ENCODE measurements at regions of chr11 and their contacts with region 1.

Region 1: DNA sequence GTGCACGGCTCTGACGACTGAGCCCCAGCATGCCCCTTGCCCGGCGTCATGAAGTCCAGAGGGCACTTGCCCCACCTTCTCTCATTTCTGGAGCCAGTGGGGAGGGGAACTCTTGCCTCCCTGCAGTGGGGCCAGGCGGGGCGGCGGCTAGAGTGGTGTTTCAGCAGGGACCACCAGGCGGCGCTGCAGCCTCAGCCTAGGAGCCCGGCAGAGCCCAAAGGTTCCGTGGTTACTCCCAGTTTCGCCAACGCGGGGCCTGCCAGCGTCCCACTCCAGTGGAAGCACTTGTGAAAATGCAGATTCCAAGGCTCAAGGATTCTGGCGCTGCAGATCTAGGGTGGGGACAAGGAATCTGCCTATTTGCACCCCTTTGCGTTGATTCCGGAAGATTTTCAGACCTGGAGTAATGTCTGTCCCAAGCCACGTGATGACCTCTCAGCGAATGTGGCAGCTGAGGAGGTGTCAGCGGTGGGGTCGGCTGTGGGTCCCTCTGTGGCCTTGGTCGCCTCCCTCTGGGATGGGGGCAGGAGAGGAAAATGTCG is 55.7 kb downstream of the CD82 start:
- DNase-seq: peak; percentile 78 to 89
- H3K4me3 ChIP-seq: no peak overlapping the region
- H3K4me3 Mint-ChIP-seq: peak overlapping the region; percentile 23
- H3K27ac Mint-ChIP-seq: no peak overlapping the region
- H3K4me1 ChIP-seq: no peaks in the 10 kb centered on the region
- H3K4me1 Mint-ChIP-seq: no peaks in the 10 kb centered on the region
- H3K27me3 ChIP-seq: no peaks in the 10 kb centered on the region; the same call in 1 of the 2 replicates
- H3K27me3 Mint-ChIP-seq: no peaks in the 10 kb centered on the region
- CTCF ChIP-seq: peak; percentile 95 to 97

Region 2: GRCh38 chr11:44095506-44096394 is 525.5 kb before region 1 on chr11 and contains the start of gene EXT2:
- CTCF ChIA-PET with region 1: no interaction called
- POLR2A ChIA-PET with region 1: no interaction called
- intact Hi-C with region 1: loop called (anchors 2 kb)
- DNase-seq: peak; percentile 84 to 92
- H3K4me3 ChIP-seq: peak within 1 kb of the TSS; percentile 95
- H3K4me3 Mint-ChIP-seq: peak within 1 kb of the TSS; percentile 94
- H3K27ac Mint-ChIP-seq: peak within 1 kb of the TSS; percentile 83
- H3K4me1 ChIP-seq: peaks cover 6% of the 10 kb centered on the region; the same call in 1 of the 2 replicates
- H3K4me1 Mint-ChIP-seq: peaks cover 18% of the 10 kb centered on the region
- H3K27me3 ChIP-seq: no peaks in the 10 kb centered on the region
- H3K27me3 Mint-ChIP-seq: peaks cover 3% of the 10 kb centered on the region
- CTCF ChIP-seq: peak; percentile 76 to 97
- total RNA-seq, gene EXT2: 71.5 and 83.3 TPM in 2 replicates

Region 3: GRCh38 chr11:44565211-44565952 is 55.8 kb before region 1 on chr11 and contains the start of gene CD82:
- CTCF ChIA-PET with region 1: interaction called, 36 read pairs
- POLR2A ChIA-PET with region 1: no interaction called
- intact Hi-C with region 1: loop called (anchors 2 kb)
- DNase-seq: peak; percentile 98 to 99
- H3K4me3 ChIP-seq: peak within 1 kb of the TSS; percentile 52
- H3K4me3 Mint-ChIP-seq: peak within 1 kb of the TSS; percentile 72
- H3K27ac Mint-ChIP-seq: peak within 1 kb of the TSS; percentile 51
- H3K4me1 ChIP-seq: no peaks in the 10 kb centered on the region
- H3K4me1 Mint-ChIP-seq: no peaks in the 10 kb centered on the region
- H3K27me3 ChIP-seq: no peaks in the 10 kb centered on the region; the same call in 1 of the 2 replicates
- H3K27me3 Mint-ChIP-seq: peaks cover 4% of the 10 kb centered on the region
- CTCF ChIP-seq: peak; percentile 35
- total RNA-seq, gene CD82: 3.7 and 4.3 TPM in 2 replicates

Region 4: GRCh38 chr11:44658506-44658850 is 37.3 kb after region 1 on chr11:
- CTCF ChIA-PET with region 1: no interaction called
- POLR2A ChIA-PET with region 1: no interaction called
- intact Hi-C with region 1: no loop called
- DNase-seq: peak in 1 of 2 experiments; percentile 21
- H3K4me3 ChIP-seq: no peak overlapping the region
- H3K4me3 Mint-ChIP-seq: no peak overlapping the region
- H3K27ac Mint-ChIP-seq: no peak overlapping the region
- H3K4me1 ChIP-seq: no peaks in the 10 kb centered on the region
- H3K4me1 Mint-ChIP-seq: no peaks in the 10 kb centered on the region
- H3K27me3 ChIP-seq: no peaks in the 10 kb centered on the region
- H3K27me3 Mint-ChIP-seq: peaks cover 15% of the 10 kb centered on the region
- CTCF ChIP-seq: peak in 1 of 2 experiments; percentile 47

Region 5: GRCh38 chr11:44727373-44728287 is 106.4 kb after region 1 on chr11:
- CTCF ChIA-PET with region 1: interaction called, 4 read pairs
- POLR2A ChIA-PET with region 1: no interaction called
- intact Hi-C with region 1: loop called (anchors 5 kb)
- DNase-seq: peak; percentile 83 to 89
- H3K4me3 ChIP-seq: peak overlapping the region; percentile 72
- H3K4me3 Mint-ChIP-seq: peak overlapping the region; percentile 76
- H3K27ac Mint-ChIP-seq: no peak overlapping the region
- H3K4me1 ChIP-seq: peaks cover 23% of the 10 kb centered on the region
- H3K4me1 Mint-ChIP-seq: peaks cover 8% of the 10 kb centered on the region
- H3K27me3 ChIP-seq: no peaks in the 10 kb centered on the region
- H3K27me3 Mint-ChIP-seq: no peaks in the 10 kb centered on the region
- CTCF ChIP-seq: peak; percentile 94 to 96

Region 6: GRCh38 chr11:44893846-44894617 is 272.8 kb after region 1 on chr11:
- CTCF ChIA-PET with region 1: interaction called, 4 read pairs
- POLR2A ChIA-PET with region 1: no interaction called
- intact Hi-C with region 1: loop called (anchors 5 kb)
- DNase-seq: peak; percentile 59 to 72
- H3K4me3 ChIP-seq: no peak overlapping the region
- H3K4me3 Mint-ChIP-seq: no peak overlapping the region
- H3K27ac Mint-ChIP-seq: no peak overlapping the region
- H3K4me1 ChIP-seq: no peaks in the 10 kb centered on the region
- H3K4me1 Mint-ChIP-seq: no peaks in the 10 kb centered on the region
- H3K27me3 ChIP-seq: no peaks in the 10 kb centered on the region
- H3K27me3 Mint-ChIP-seq: peaks cover 7% of the 10 kb centered on the region
- CTCF ChIP-seq: peak; percentile 87 to 94

Region 7: GRCh38 chr11:45102810-45103621 is 481.8 kb after region 1 on chr11:
- CTCF ChIA-PET with region 1: no interaction called
- POLR2A ChIA-PET with region 1: no interaction called
- intact Hi-C with region 1: loop called (anchors 10 kb)
- DNase-seq: peak in 1 of 2 experiments; percentile 68
- H3K4me3 ChIP-seq: no peak overlapping the region
- H3K4me3 Mint-ChIP-seq: no peak overlapping the region
- H3K27ac Mint-ChIP-seq: no peak overlapping the region
- H3K4me1 ChIP-seq: peaks cover 4% of the 10 kb centered on the region; the same call in 1 of the 2 replicates
- H3K4me1 Mint-ChIP-seq: no peaks in the 10 kb centered on the region
- H3K27me3 ChIP-seq: no peaks in the 10 kb centered on the region
- H3K27me3 Mint-ChIP-seq: peaks cover 21% of the 10 kb centered on the region
- CTCF ChIP-seq: peak; percentile 92 to 96

Measured in Caco-2 (cell line).